PC-9 (cell line): ENCODE measurements at regions of chrX and their contacts with region 1.

Region 1: DNA sequence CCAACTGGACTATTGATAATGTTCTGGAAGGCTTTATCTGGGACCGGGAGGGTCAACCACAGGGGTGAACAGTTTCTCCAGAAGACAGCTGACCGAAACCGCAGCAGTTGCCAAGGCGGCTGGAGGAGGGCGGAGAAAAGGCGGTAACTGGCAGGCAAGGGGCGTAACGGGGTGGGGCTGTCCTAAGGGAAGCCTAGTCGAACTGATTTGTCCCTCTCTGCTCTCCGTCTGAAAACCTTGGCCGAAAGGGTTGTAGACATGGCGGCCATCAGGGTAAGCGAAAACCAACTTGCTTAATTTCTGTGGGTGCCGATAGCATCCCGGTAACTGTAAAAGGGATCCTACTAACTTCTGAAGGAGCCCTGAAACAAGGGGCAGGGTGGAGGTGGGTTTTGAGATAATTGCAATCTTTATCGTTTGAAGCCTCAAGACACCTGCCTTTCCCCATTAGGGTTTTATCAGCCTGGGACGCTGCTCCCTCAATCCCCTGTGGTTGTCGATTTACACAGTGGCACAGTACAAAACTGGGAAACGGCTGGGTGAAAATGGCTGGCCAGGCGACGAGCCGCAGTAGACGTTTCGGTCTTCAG is at the start of gene APOOL:
- DNase-seq: peak; percentile 81
- H3K4me3 ChIP-seq: peak within 1 kb of the TSS; percentile 92
- H3K27ac ChIP-seq: peak within 1 kb of the TSS; percentile 91
- H3K4me1 ChIP-seq: no peaks in the 10 kb centered on the region
- H3K27me3 ChIP-seq: no peaks in the 10 kb centered on the region
- CTCF ChIP-seq: no peak
- total RNA-seq, gene APOOL: 14.8 and 21.7 TPM in 2 replicates

Region 2: DNA sequence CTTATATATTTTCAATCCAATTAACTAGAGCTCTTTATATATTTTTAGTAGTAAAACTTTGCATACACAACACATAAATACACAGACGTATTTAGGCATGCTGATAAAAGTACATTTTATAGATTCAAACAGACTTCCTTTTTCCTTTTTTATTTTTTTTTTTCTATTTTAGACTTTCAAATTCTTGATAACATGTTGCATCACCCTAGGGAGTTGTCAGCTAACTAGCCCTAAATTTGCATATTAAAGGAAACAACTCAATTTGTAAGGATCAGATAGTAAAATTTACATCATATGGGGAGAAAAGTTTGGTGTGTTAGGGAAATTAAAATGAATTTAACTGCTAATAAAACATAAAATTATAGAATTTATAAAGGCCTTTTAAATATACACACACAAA is 47.4 kb before region 1 on chrX:
- CTCF ChIA-PET with region 1: no interaction called
- POLR2A ChIA-PET with region 1: no interaction called
- intact Hi-C with region 1: loop called (anchors 2 kb)
- DNase-seq: no peak
- H3K4me3 ChIP-seq: no peak overlapping the region
- H3K27ac ChIP-seq: no peak overlapping the region
- H3K4me1 ChIP-seq: no peaks in the 10 kb centered on the region
- H3K27me3 ChIP-seq: no peaks in the 10 kb centered on the region
- CTCF ChIP-seq: no peak

Region 3: GRCh38 chrX:84974803-84975202 is 28.9 kb before region 1 on chrX:
- CTCF ChIA-PET with region 1: no interaction called
- POLR2A ChIA-PET with region 1: interaction called, 16 read pairs
- intact Hi-C with region 1: no loop called
- DNase-seq: no peak
- H3K4me3 ChIP-seq: no peak overlapping the region
- H3K27ac ChIP-seq: no peak overlapping the region
- H3K4me1 ChIP-seq: no peaks in the 10 kb centered on the region
- H3K27me3 ChIP-seq: no peaks in the 10 kb centered on the region
- CTCF ChIP-seq: no peak

Region 4: DNA sequence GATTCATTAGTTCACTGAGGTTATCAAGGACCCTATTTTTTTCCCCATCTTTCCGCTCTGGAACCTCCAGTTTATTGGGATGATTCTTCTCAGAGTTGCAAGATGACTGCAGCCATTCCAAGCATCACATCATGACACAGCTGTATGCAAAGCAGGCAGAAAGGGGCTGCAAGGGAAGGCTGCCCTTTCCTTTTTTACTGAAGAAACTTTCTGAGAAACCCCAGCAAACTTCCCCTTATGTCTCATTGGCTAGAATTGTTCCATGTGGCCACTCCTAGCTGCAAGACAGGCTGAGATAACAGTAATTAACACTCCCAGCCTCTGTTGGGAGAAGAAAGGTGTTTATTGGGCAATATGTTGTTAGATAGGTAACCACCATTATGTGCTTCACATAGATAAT is 137.2 kb after region 1 on chrX:
- CTCF ChIA-PET with region 1: no interaction called
- POLR2A ChIA-PET with region 1: no interaction called
- intact Hi-C with region 1: no loop called
- DNase-seq: no peak
- H3K4me3 ChIP-seq: no peak overlapping the region
- H3K27ac ChIP-seq: no peak overlapping the region
- H3K4me1 ChIP-seq: no peaks in the 10 kb centered on the region
- H3K27me3 ChIP-seq: no peaks in the 10 kb centered on the region
- CTCF ChIP-seq: no peak

Region 5: GRCh38 chrX:85429066-85429465 is 425.3 kb after region 1 on chrX:
- CTCF ChIA-PET with region 1: no interaction called
- POLR2A ChIA-PET with region 1: no interaction called
- intact Hi-C with region 1: no loop called
- DNase-seq: no peak
- H3K4me3 ChIP-seq: no peak overlapping the region
- H3K27ac ChIP-seq: no peak overlapping the region
- H3K4me1 ChIP-seq: no peaks in the 10 kb centered on the region
- H3K27me3 ChIP-seq: no peaks in the 10 kb centered on the region
- CTCF ChIP-seq: no peak